ENCODE measurements at regions of chr16 and their contacts with region 1.

Region 1: GRCh38 chr16:58336332-58337089 is 41.7 kb upstream of the PRSS54 start:
- DNase-seq: peak; percentile 60 to 95 (median 86)
- H3K4me3 ChIP-seq: peak overlapping the region in 2 of 4 donors; percentile 10 to 32
- H3K27ac ChIP-seq: no peak overlapping the region
- H3K4me1 ChIP-seq: no peaks in the 10 kb centered on the region
- H3K27me3 ChIP-seq: no peaks in the 10 kb centered on the region
- CTCF ChIP-seq: peak; percentile 87 to 96 (median 90)
- POLR2A ChIP-seq: no peak

Region 2: GRCh38 chr16:58264961-58265479 is 71.5 kb before region 1 on chr16:
- intact Hi-C with region 1: no loop called
- DNase-seq: peak; percentile 55 to 83 (median 75)
- H3K4me3 ChIP-seq: no peak overlapping the region
- H3K27ac ChIP-seq: peak overlapping the region in 3 of 5 donors; percentile 41 to 56 (median 45)
- H3K4me1 ChIP-seq: peaks cover 6 to 7% of the 10 kb centered on the region in 2 donors
- H3K27me3 ChIP-seq: no peaks in the 10 kb centered on the region
- CTCF ChIP-seq: no peak
- POLR2A ChIP-seq: peak in 1 of 2 donors; percentile 22

Region 3: DNA sequence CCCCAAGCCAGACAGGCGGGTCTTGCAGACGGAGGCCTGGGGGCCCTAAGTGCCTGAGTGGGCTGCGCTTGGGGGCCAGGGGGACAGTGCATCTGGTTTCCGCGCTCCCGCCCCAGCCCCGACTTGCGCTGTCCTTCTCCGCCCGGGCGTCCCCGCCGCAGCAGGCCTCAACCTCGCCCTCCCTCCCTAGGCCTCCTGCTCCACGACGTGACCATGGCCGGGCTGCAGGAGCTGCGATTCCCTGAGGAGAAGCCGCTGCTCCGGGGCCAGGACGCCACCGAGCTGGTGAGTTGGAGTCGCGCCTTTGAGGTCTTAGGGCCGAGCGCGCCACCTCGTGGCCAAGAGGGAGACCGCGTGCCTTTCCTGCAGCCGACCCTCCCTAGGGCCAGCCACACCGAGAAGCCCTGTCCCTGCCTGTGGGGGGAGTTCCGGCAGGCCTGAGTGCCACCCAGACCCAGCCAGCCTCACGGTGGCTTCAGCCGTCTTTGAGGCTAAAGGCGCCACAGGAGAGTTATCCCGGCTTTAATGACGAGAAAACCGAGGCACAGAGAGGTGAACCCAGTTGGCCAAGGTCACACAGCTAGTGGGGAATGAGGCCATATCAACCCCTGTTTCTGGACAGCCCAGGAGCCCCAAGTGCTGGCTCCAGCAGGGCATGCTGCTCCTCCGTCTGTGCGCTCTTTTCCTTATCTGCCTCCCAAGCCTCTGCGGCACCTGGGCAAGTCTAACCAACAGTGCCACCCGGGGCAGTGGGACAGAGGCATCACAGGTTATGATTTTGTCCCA is 151.2 kb after region 1 on chr16:
- intact Hi-C with region 1: loop called (anchors 5 kb)
- DNase-seq: peak; percentile 88 to 95 (median 94)
- H3K4me3 ChIP-seq: no peak overlapping the region
- H3K27ac ChIP-seq: peak overlapping the region in 4 of 5 donors; percentile 20 to 76 (median 57)
- H3K4me1 ChIP-seq: peaks cover 25 to 27% of the 10 kb centered on the region in 2 donors
- H3K27me3 ChIP-seq: no peaks in the 10 kb centered on the region
- CTCF ChIP-seq: peak; percentile 86 to 97 (median 96)
- POLR2A ChIP-seq: peak in 1 of 2 donors; percentile 20

Region 4: DNA sequence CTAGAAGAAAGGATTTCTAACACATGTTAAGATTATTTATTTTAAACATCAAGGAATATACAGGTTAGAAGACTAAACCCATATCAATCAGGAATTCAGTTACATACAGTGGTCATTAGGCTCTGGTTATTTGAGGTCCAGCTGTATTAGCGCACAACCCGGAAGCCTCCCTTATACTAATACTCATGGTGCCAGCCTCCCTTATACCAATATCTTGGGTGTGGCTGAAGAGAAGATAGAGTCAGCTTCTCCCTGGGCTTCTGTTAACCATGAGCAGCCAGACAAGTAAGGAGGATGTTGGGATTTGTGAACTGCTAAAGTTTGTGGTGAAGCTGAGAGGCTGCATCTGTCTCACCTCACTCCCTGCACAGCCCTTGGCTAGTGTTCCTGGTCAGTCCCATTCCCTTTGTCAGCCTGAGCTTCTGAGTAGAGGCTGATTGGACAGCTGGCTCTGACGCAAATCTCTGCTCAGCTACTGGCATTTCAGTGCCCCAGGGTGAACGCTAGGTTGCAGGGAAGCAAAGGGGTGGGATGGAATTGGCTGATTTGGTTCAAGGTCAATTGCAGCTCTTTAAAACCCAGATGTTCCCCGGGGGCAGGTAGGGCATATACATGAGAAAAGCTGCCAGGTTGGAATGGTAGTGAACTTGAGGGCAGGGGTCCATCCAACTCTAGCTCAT is 316.1 kb after region 1 on chr16:
- intact Hi-C with region 1: loop called in 1 of 2 experiments (anchors 10 kb)
- DNase-seq: peak in 6 of 7 donors; percentile 51 to 83 (median 62)
- H3K4me3 ChIP-seq: no peak overlapping the region
- H3K27ac ChIP-seq: no peak overlapping the region
- H3K4me1 ChIP-seq: no peaks in the 10 kb centered on the region
- H3K27me3 ChIP-seq: no peaks in the 10 kb centered on the region
- CTCF ChIP-seq: peak in 2 of 6 experiments; percentile 14 to 28
- POLR2A ChIP-seq: peak in 1 of 2 donors; percentile 4